PC-3 (cell line): ENCODE measurements at regions of chr10 and their contacts with region 1.

Region 1: GRCh38 chr10:51063659-51064535 is 10.4 kb upstream of the PRKG1 start:
- DNase-seq: peak; percentile 99
- ATAC-seq: peak; percentile 100
- H3K4me3 ChIP-seq: no peak overlapping the region
- H3K27ac ChIP-seq: no peak overlapping the region
- H3K4me1 ChIP-seq: no peaks in the 10 kb centered on the region
- H3K27me3 ChIP-seq: peaks cover 8% of the 10 kb centered on the region
- CTCF ChIP-seq: peak; percentile 100

Region 2: DNA sequence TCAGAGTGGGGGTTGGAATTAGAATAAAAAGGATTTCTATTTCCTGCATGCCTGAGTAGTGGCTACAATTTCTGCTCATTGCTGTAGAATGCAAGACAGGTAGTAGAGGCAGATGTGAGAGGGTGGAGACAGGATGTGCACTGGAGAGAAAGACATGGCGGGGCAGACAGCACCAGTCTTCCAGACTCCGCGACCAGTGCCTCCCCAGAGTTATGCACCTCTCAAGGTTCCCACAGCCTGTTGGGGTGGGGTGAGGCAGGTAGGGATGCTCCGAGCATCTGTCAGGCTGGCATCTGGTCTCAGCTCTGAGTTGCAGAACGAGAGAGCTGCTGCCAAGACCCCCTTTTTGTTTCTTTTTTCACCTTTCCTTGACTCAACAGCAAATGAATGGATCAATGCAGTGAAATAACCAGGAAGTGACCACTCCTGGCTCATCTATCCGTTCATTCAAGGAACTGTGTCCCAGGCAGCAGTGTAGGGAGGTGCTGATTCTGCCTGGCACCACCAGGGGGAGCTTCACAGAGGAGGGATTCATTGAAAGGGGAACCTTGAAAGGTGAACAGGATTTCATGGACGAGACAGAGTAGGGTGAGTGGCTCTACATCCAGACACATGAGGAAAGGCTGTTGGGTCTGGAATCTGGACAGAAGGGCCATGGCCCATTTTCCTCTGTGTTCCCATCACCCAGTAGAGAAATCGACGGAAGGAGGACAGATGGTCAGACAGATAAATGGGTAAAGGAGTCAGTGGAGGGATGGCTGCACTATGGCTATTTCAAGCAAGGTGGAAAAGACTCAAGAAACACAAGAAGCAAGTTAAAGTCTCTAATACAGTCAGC is 1471.0 kb before region 1 on chr10:
- CTCF ChIA-PET with region 1: no interaction called
- POLR2A ChIA-PET with region 1: no interaction called
- intact Hi-C with region 1: loop called (anchors 1 kb)
- DNase-seq: peak; percentile 99
- ATAC-seq: peak; percentile 86
- H3K4me3 ChIP-seq: no peak overlapping the region
- H3K27ac ChIP-seq: no peak overlapping the region
- H3K4me1 ChIP-seq: peaks cover 8% of the 10 kb centered on the region; the same call in 1 of the 2 replicates
- H3K27me3 ChIP-seq: no peaks in the 10 kb centered on the region
- CTCF ChIP-seq: peak; percentile 100

Region 3: DNA sequence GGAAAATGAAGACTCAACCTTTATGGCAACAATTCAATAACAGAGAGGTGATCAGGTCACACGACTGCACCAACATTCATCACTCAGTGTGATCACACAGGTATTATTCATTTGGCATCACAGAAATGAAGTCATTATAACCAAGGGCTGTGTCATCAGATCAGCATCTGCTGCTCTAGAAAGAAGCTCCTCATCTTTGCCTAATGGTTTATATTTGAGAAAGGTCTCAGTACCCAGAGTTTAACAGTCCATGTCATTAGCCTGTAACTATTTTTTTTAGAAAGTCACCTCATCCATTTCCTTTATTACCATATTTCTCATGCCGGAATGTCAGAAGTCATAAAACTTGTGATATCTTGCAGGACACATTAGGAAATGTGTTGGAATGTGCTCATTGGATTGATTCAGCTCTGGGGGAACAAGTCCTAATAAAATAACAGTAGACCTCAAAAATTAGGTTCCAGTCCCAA is 34.7 kb before region 1 on chr10:
- CTCF ChIA-PET with region 1: no interaction called
- POLR2A ChIA-PET with region 1: no interaction called
- intact Hi-C with region 1: no loop called
- DNase-seq: peak; percentile 33
- ATAC-seq: no peak
- H3K4me3 ChIP-seq: no peak overlapping the region
- H3K27ac ChIP-seq: no peak overlapping the region
- H3K4me1 ChIP-seq: no peaks in the 10 kb centered on the region
- H3K27me3 ChIP-seq: peaks cover 24% of the 10 kb centered on the region
- CTCF ChIP-seq: no peak

Region 4: DNA sequence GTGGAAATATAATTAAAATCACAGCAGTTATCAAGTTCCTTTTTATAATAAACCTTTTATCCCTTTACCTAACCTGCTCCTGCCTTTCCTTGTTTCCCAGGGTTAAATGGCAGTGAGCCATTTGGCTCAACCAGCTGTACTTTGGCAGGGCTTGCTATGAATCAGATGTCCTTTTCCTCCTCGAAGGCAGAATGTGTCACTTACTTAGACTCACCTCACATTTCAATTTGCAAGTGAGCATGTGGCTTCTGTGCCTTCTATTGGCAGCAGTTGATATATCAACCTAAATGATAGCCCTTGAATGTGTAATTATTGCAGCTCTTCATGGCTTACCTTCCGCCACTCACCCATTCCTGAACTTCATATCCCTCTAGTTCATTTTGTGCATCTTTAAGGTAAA is 333.8 kb after region 1 on chr10:
- CTCF ChIA-PET with region 1: no interaction called
- POLR2A ChIA-PET with region 1: interaction called, 6 read pairs
- intact Hi-C with region 1: loop called (anchors 1 kb)
- DNase-seq: peak; percentile 100
- ATAC-seq: peak; percentile 99
- H3K4me3 ChIP-seq: no peak overlapping the region
- H3K27ac ChIP-seq: peak overlapping the region; percentile 50
- H3K4me1 ChIP-seq: peaks cover 14% of the 10 kb centered on the region
- H3K27me3 ChIP-seq: no peaks in the 10 kb centered on the region
- CTCF ChIP-seq: peak; percentile 83

Region 5: DNA sequence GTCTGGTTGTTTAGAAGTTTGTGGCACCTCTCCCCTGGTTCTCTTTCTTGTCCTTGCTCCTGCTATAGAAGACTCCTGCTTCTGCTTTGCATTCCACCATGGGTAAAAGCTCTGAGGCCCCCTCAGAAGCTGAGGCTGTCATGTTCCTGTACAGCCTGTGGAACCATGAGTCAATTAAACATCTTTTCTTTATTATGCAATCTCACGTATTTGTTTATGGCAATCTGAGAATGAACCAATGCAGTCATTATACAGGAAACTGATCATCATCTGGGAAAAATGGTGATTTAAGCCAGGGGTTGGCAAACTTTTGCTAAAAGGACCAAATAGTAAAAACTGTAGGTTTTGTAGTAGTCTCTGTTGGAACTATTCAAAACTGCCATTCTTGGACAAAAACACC is 460.1 kb after region 1 on chr10:
- CTCF ChIA-PET with region 1: no interaction called
- POLR2A ChIA-PET with region 1: no interaction called
- intact Hi-C with region 1: loop called (anchors 5 kb)
- DNase-seq: peak; percentile 48
- ATAC-seq: no peak; the same call in 1 of the 2 replicates
- H3K4me3 ChIP-seq: no peak overlapping the region
- H3K27ac ChIP-seq: no peak overlapping the region
- H3K4me1 ChIP-seq: no peaks in the 10 kb centered on the region
- H3K27me3 ChIP-seq: peaks cover 17% of the 10 kb centered on the region
- CTCF ChIP-seq: no peak

Region 6: GRCh38 chr10:51691135-51691534 is 627.2 kb after region 1 on chr10:
- CTCF ChIA-PET with region 1: no interaction called
- POLR2A ChIA-PET with region 1: no interaction called
- intact Hi-C with region 1: loop called (anchors 5 kb)
- DNase-seq: peak; percentile 34
- ATAC-seq: no peak
- H3K4me3 ChIP-seq: no peak overlapping the region
- H3K27ac ChIP-seq: no peak overlapping the region
- H3K4me1 ChIP-seq: peaks cover 11% of the 10 kb centered on the region
- H3K27me3 ChIP-seq: no peaks in the 10 kb centered on the region
- CTCF ChIP-seq: no peak

Region 7: DNA sequence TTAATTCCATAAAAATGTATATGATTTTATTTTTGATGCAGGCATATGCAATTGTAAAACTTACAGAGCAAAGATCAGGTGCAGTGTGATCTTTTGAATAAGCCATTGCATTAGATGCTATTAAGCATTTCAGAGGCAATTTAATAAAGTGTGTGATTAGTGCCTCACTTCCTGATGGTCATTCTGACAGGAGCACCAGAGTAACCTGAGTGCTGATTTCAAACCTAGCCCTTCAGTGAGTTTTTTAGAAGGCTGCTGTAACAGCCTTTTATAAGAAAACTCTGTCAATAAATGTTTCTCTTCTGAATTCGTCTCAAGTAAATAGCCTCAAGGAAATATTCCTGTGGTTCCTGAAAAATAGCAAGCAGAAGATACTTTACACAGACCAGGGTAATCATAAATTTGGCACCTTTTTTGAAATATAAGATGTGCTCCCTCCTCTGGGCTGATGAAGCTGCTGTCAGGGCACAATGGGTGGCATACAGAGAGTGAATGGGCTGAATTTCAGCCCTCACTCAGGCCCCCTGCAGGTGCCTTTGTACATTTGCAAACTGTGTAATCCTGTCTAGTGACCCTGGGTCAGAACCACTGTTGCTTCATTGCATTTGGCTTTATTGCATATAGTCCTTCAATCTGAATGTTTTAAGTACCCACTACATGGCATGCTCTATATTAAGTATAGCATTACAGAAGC is 829.2 kb after region 1 on chr10:
- CTCF ChIA-PET with region 1: no interaction called
- POLR2A ChIA-PET with region 1: no interaction called
- intact Hi-C with region 1: loop called (anchors 5 kb)
- DNase-seq: peak; percentile 85
- ATAC-seq: peak; percentile 93
- H3K4me3 ChIP-seq: no peak overlapping the region
- H3K27ac ChIP-seq: no peak overlapping the region
- H3K4me1 ChIP-seq: no peaks in the 10 kb centered on the region
- H3K27me3 ChIP-seq: no peaks in the 10 kb centered on the region
- CTCF ChIP-seq: peak; percentile 98

Region 8: GRCh38 chr10:52004342-52004949 is 940.5 kb after region 1 on chr10:
- CTCF ChIA-PET with region 1: interaction called, 5 read pairs
- POLR2A ChIA-PET with region 1: no interaction called
- intact Hi-C with region 1: loop called (anchors 1 kb)
- DNase-seq: peak; percentile 94
- ATAC-seq: peak; percentile 89
- H3K4me3 ChIP-seq: no peak overlapping the region
- H3K27ac ChIP-seq: no peak overlapping the region
- H3K4me1 ChIP-seq: no peaks in the 10 kb centered on the region
- H3K27me3 ChIP-seq: peaks cover 15% of the 10 kb centered on the region; the same call in 1 of the 2 replicates
- CTCF ChIP-seq: peak; percentile 96